CD4-positive, alpha-beta T cell (primary cell): ENCODE measurements at regions of chr10 and their contacts with region 1.

Region 1: GRCh38 chr10:100912605-100913469 is at the start of gene SLF2:
- DNase-seq: peak; percentile 71 to 97 (median 90)
- ATAC-seq: peak; percentile 80
- H3K4me3 ChIP-seq: peak within 1 kb of the TSS; percentile 71
- H3K4me3 Mint-ChIP-seq: peak within 1 kb of the TSS; percentile 98
- H3K27ac ChIP-seq: peak within 1 kb of the TSS; percentile 78 to 80
- H3K27ac Mint-ChIP-seq: peak within 1 kb of the TSS; percentile 94
- H3K4me1 ChIP-seq: peaks cover 15% of the 10 kb centered on the region
- H3K4me1 Mint-ChIP-seq: peaks cover 60% of the 10 kb centered on the region
- H3K27me3 ChIP-seq: no peaks in the 10 kb centered on the region
- H3K27me3 Mint-ChIP-seq: no peaks in the 10 kb centered on the region
- CTCF ChIP-seq: no peak
- total RNA-seq, gene SLF2: 11.1 TPM

Region 2: DNA sequence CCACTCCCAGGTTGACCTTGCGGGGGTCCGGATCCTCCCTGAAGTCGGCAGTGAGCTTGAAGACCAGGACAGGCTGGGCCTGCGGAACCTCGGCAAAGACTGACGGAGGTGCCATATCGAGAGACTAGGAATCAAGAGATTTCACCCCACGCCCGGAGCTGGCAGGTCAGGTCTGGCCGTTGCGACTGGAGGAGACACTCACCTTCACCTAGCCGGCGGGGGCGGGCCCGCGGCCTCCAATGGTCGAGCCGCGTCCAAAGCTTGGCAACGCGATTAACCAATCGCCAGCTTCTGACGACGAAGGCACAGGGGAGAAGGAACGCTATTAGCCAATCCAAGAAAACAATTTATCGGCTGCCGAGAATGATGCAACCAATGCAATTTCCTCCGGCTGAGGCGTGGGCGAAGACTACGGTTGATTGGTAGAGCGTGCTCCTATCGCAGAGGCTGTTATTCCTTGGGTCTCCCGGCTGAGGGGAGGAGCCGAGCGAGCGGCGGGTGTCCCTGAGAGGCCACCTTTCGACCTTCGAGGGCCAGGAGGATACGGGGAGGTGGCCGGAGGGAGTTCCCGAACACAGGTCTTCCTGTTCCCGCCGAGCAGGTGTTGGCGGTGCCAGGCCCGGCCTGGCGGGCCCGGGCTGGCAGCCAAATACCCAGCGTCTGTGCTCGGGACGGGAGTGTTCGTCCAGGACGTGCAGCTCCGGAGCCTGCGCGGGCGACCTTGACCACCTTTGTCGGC is 1482.2 kb before region 1 on chr10 and contains the start of gene GOT1:
- CTCF ChIA-PET with region 1: no interaction called
- POLR2A ChIA-PET with region 1: no interaction called
- intact Hi-C with region 1: loop called in 1 of 2 experiments (anchors 5 kb)
- DNase-seq: peak; percentile 79 to 98 (median 87)
- ATAC-seq: peak; percentile 93
- H3K4me3 ChIP-seq: peak within 1 kb of the TSS; percentile 93
- H3K4me3 Mint-ChIP-seq: peak within 1 kb of the TSS; percentile 91
- H3K27ac ChIP-seq: peak within 1 kb of the TSS; percentile 52 to 67
- H3K27ac Mint-ChIP-seq: peak within 1 kb of the TSS; percentile 95
- H3K4me1 ChIP-seq: peaks cover 17% of the 10 kb centered on the region
- H3K4me1 Mint-ChIP-seq: peaks cover 47% of the 10 kb centered on the region
- H3K27me3 ChIP-seq: no peaks in the 10 kb centered on the region
- H3K27me3 Mint-ChIP-seq: no peaks in the 10 kb centered on the region
- CTCF ChIP-seq: no peak
- total RNA-seq, gene GOT1: 3.5 to 5.7 TPM

Region 3: GRCh38 chr10:100072514-100072913 is 840.3 kb before region 1 on chr10:
- CTCF ChIA-PET with region 1: no interaction called
- POLR2A ChIA-PET with region 1: no interaction called
- intact Hi-C with region 1: no loop called
- DNase-seq: no peak
- ATAC-seq: no peak
- H3K4me3 ChIP-seq: no peak overlapping the region
- H3K4me3 Mint-ChIP-seq: no peak overlapping the region
- H3K27ac ChIP-seq: no peak overlapping the region
- H3K27ac Mint-ChIP-seq: no peak overlapping the region
- H3K4me1 ChIP-seq: no peaks in the 10 kb centered on the region
- H3K4me1 Mint-ChIP-seq: no peaks in the 10 kb centered on the region
- H3K27me3 ChIP-seq: no peaks in the 10 kb centered on the region
- H3K27me3 Mint-ChIP-seq: peaks cover 14% of the 10 kb centered on the region
- CTCF ChIP-seq: no peak

Region 4: DNA sequence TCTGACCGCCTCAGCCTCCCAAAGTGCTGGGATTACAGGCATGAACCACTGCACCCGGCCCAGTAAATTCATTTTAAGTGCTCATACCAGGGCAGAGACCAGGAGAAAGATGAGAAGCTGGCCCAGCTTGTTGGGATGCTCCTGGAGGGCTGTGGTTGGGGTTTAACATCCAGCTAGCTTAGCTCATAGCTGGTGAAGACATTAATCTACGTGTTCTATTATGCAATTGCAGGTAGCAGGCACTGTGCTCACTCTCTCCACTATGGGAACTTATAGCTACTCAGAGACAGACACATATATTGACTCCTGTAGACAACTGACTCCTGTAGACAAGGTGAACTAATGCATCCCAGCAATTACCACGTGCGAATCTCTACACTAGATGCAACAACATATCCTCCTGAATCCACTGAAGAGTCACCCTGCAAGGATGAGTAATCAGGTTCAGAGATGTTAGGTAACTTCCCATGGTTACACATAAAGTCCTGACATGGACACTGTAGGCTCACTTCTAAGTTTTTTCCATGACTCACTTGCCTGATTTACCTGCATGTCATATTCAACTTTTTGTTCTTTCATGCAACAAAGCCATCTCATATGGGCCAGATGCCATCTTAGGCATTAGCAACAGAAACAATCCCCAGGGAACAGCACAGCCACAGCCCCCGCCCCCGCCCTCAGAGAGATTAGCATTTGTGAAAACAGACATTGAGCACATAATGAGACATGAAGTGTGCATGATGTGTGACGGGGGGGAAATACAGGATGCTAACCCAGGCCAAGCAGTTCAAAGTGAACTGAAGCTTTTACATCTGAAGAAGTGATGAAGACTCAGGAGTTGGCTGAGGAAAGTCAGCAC is 764.3 kb before region 1 on chr10:
- CTCF ChIA-PET with region 1: no interaction called
- POLR2A ChIA-PET with region 1: no interaction called
- intact Hi-C with region 1: no loop called
- DNase-seq: peak in 1 of 14 experiments; percentile 11
- ATAC-seq: no peak
- H3K4me3 ChIP-seq: no peak overlapping the region
- H3K4me3 Mint-ChIP-seq: no peak overlapping the region
- H3K27ac ChIP-seq: no peak overlapping the region
- H3K27ac Mint-ChIP-seq: no peak overlapping the region
- H3K4me1 ChIP-seq: no peaks in the 10 kb centered on the region
- H3K4me1 Mint-ChIP-seq: no peaks in the 10 kb centered on the region
- H3K27me3 ChIP-seq: no peaks in the 10 kb centered on the region
- H3K27me3 Mint-ChIP-seq: peaks cover 4% of the 10 kb centered on the region
- CTCF ChIP-seq: no peak

Region 5: GRCh38 chr10:100625816-100626215 is 287.0 kb before region 1 on chr10:
- CTCF ChIA-PET with region 1: no interaction called
- POLR2A ChIA-PET with region 1: no interaction called
- intact Hi-C with region 1: no loop called
- DNase-seq: no peak
- ATAC-seq: no peak
- H3K4me3 ChIP-seq: no peak overlapping the region
- H3K4me3 Mint-ChIP-seq: no peak overlapping the region
- H3K27ac ChIP-seq: no peak overlapping the region
- H3K27ac Mint-ChIP-seq: no peak overlapping the region
- H3K4me1 ChIP-seq: no peaks in the 10 kb centered on the region
- H3K4me1 Mint-ChIP-seq: peaks cover 5% of the 10 kb centered on the region
- H3K27me3 ChIP-seq: peaks cover 42 to 45% of the 10 kb centered on the region in 2 experiments
- H3K27me3 Mint-ChIP-seq: peaks cover 73% of the 10 kb centered on the region
- CTCF ChIP-seq: no peak

Region 6: DNA sequence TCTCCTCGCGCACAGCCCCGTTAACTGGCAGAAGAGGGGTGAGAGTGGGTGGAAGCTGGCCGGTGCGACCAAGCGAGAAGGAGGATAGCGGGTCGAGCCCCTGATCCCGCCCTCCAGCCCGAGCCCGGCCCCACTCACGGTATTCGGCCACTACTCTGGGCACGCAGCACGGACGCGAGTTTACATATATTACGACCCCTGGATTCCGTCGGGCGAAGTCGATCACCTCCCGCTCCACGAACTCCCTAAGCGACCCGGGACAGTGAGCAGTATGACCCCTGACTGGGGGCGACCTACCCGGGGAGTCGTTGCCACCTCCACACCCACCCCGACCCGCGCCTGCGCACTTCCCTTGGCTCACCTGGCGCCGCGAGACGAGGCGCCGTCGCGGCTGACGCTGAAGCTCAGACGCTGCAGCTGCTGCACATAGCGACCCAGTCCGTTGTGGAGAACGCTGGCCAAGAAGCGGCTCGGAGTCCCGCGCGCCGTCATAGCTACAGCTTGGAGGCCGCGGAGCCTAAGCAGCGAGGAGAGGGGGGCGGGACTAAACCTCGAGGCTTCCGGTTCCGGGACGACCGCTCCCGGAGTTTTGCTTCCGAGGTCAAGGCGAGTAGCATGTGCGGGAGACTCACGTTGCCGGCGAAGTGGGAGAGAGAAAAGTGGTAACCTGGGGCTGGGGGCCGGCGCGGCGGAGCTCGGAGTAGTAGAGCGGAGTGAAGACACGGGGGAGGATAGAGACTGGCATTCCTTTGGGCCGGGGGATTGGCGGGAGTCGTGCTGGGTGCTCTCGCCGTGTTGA is 74.3 kb after region 1 on chr10 and contains the starts of genes MRPL43 and TWNK:
- CTCF ChIA-PET with region 1: no interaction called
- POLR2A ChIA-PET with region 1: interaction called, 4 read pairs
- intact Hi-C with region 1: loop called in 1 of 2 experiments (anchors 2 kb)
- DNase-seq: peak; percentile 74 to 92 (median 81)
- ATAC-seq: peak; percentile 96
- H3K4me3 ChIP-seq: peak within 1 kb of the TSS; percentile 96
- H3K4me3 Mint-ChIP-seq: peak within 1 kb of the TSS; percentile 97
- H3K27ac ChIP-seq: peak within 1 kb of the TSS; percentile 52 to 67
- H3K27ac Mint-ChIP-seq: peak within 1 kb of the TSS; percentile 86
- H3K4me1 ChIP-seq: peaks cover 41% of the 10 kb centered on the region
- H3K4me1 Mint-ChIP-seq: peaks cover 26% of the 10 kb centered on the region
- H3K27me3 ChIP-seq: no peaks in the 10 kb centered on the region
- H3K27me3 Mint-ChIP-seq: no peaks in the 10 kb centered on the region
- CTCF ChIP-seq: no peak
- total RNA-seq, gene MRPL43: 28.5 to 31.0 TPM
- total RNA-seq, gene TWNK: 2.7 to 2.8 TPM

Region 7: DNA sequence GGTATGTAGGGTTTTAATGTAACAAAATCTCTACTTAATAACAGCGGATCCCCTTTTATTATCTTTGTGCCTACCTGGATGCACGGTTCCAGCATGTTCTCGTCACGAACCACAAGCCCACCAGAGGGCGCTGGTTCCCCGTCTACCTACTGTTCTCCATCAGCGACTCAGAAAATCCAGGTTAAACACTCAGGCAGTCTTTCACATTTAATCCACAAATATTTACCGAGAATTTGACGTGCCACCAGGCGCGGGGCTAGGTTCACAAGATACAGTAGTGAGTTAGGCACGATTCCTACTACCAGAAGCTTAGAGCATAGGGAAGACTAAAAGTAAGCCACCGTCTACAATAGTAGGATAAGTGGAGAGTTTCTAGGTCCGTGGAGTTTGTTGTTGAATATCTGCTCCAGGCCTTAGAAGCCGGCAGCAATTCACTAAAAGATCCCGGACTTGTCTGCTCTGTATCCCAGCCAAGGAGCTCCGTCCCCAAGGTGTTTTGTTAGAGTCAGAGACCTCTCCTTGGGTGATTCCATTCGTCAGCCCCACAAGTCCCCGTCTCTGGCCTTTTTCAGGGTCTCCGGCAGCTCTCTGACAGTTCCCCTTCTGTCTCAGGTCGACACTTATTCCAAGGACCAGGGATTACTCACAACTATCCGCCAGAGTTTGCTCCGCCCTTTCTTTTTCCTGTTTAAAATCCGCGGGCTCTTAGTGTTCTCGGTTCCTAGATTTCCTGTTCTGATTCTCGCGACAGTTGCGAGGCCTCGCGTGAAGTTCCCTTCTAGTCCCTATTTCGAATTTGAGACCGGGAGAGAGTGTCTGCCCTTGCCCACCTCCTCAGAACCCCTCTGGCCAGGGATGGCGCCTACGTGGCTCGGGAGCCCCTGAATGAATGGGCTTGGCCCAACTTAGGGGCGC is 147.5 kb after region 1 on chr10:
- CTCF ChIA-PET with region 1: no interaction called
- POLR2A ChIA-PET with region 1: no interaction called
- intact Hi-C with region 1: loop called in 1 of 2 experiments (anchors 5 kb)
- DNase-seq: peak; percentile 79 to 95 (median 90)
- ATAC-seq: peak; percentile 70
- H3K4me3 ChIP-seq: peak overlapping the region; percentile 85
- H3K4me3 Mint-ChIP-seq: peak overlapping the region; percentile 95
- H3K27ac ChIP-seq: peak overlapping the region; percentile 88 to 91
- H3K27ac Mint-ChIP-seq: peak overlapping the region; percentile 81
- H3K4me1 ChIP-seq: peaks cover 40% of the 10 kb centered on the region
- H3K4me1 Mint-ChIP-seq: peaks cover 31% of the 10 kb centered on the region
- H3K27me3 ChIP-seq: peaks cover 27% of the 10 kb centered on the region in 2 experiments
- H3K27me3 Mint-ChIP-seq: peaks cover 20% of the 10 kb centered on the region
- CTCF ChIP-seq: peak; percentile 98

Region 8: DNA sequence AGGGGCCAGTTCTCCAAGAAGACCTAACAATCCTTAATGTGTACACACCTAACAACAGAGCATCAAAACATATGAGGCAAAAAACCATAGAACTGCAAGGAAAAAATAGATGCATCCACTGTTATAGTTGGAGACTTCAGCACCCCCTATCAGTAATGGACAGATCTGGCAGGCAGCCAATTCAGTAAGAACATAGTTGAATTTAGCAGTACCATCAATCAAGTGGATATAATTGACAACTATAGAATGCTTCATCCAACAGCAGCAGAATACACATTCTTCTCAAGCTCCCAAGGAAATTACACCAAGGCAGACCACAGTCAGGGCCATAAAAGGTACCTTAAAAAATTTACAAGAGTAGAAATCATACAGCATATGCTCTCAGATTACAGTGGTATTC is 633.1 kb after region 1 on chr10:
- CTCF ChIA-PET with region 1: no interaction called
- POLR2A ChIA-PET with region 1: no interaction called
- intact Hi-C with region 1: no loop called
- DNase-seq: no peak
- ATAC-seq: no peak
- H3K4me3 ChIP-seq: no peak overlapping the region
- H3K4me3 Mint-ChIP-seq: no peak overlapping the region
- H3K27ac ChIP-seq: no peak overlapping the region
- H3K27ac Mint-ChIP-seq: no peak overlapping the region
- H3K4me1 ChIP-seq: no peaks in the 10 kb centered on the region
- H3K4me1 Mint-ChIP-seq: no peaks in the 10 kb centered on the region
- H3K27me3 ChIP-seq: no peaks in the 10 kb centered on the region
- H3K27me3 Mint-ChIP-seq: no peaks in the 10 kb centered on the region
- CTCF ChIP-seq: no peak